Activated T-helper 1 cell treated with anti-CD3 and anti-CD28 coated beads, Interleukin-12 subunit alpha, Interleukin-12 subunit beta, Interleukin-2, Interleukin-4 antibody, amounts not matched to agents 30 ng/mL and 10 ng/mL and 1 ng/mL, durations not matched to agents 14 hours and 24 hours and 36 hours (primary cell): ENCODE measurements at regions of chr1 and their contacts with region 1.

Region 1: DNA sequence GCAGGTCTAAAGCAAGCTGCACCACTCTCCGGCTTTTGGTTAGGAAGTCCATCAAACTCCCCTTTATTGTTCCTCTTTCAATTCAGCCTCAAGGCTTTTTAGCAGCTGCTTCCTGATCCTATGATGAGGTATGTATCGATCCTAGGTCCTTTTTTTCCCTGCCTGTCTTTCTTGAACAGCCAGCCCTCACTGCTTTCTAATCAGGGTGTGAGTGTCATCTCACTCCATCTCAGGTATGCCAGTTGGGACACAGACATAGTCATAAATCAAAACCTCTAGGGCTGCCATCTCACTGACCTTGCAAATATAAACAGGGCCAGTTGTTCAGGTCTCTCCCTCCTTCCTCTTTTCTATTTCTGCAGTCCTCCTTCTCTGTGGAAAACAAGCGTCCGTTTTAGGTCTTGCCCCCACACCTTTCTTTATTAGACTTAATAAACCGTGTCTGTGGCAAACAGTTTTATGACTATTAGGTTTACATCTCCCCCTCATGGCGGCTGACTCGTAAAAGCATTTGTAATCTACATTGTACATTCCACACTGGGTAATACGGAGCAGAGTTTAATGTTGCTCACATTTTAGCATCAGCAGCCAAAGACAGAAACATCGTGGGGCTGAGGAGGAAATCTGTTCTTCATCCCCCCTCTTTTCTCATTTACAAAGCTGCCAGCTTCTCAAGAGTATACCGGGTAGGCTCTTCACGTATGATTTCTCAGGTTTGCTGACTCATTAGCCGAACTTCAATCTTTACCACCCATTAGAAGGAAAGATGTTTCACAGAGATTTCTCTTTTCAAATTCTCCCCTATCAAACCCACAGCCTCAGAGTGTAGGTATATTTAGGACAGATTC is 11.6 kb downstream of the STYXL2 start:
- DNase-seq: no peak
- H3K4me3 Mint-ChIP-seq: peak overlapping the region; percentile 4
- H3K27ac Mint-ChIP-seq: no peak overlapping the region
- H3K4me1 Mint-ChIP-seq: peaks cover 66% of the 10 kb centered on the region
- H3K27me3 Mint-ChIP-seq: no peaks in the 10 kb centered on the region

Region 2: GRCh38 chr1:166952002-166952746 is 153.3 kb before region 1 on chr1:
- intact Hi-C with region 1: no loop called
- DNase-seq: no peak
- H3K4me3 Mint-ChIP-seq: no peak overlapping the region
- H3K27ac Mint-ChIP-seq: peak overlapping the region; percentile 13
- H3K4me1 Mint-ChIP-seq: peaks cover 19% of the 10 kb centered on the region
- H3K27me3 Mint-ChIP-seq: peaks cover 21% of the 10 kb centered on the region

Region 3: GRCh38 chr1:167084757-167085156 is 20.7 kb before region 1 on chr1:
- intact Hi-C with region 1: loop called (anchors 2 kb)
- DNase-seq: no peak
- H3K4me3 Mint-ChIP-seq: no peak overlapping the region
- H3K27ac Mint-ChIP-seq: no peak overlapping the region
- H3K4me1 Mint-ChIP-seq: no peaks in the 10 kb centered on the region
- H3K27me3 Mint-ChIP-seq: peaks cover 7% of the 10 kb centered on the region

Region 4: GRCh38 chr1:167095368-167095767 is 10.1 kb before region 1 on chr1:
- intact Hi-C with region 1: no loop called
- DNase-seq: no peak
- H3K4me3 Mint-ChIP-seq: no peak overlapping the region
- H3K27ac Mint-ChIP-seq: no peak overlapping the region
- H3K4me1 Mint-ChIP-seq: peaks cover 6% of the 10 kb centered on the region
- H3K27me3 Mint-ChIP-seq: no peaks in the 10 kb centered on the region

Region 5: DNA sequence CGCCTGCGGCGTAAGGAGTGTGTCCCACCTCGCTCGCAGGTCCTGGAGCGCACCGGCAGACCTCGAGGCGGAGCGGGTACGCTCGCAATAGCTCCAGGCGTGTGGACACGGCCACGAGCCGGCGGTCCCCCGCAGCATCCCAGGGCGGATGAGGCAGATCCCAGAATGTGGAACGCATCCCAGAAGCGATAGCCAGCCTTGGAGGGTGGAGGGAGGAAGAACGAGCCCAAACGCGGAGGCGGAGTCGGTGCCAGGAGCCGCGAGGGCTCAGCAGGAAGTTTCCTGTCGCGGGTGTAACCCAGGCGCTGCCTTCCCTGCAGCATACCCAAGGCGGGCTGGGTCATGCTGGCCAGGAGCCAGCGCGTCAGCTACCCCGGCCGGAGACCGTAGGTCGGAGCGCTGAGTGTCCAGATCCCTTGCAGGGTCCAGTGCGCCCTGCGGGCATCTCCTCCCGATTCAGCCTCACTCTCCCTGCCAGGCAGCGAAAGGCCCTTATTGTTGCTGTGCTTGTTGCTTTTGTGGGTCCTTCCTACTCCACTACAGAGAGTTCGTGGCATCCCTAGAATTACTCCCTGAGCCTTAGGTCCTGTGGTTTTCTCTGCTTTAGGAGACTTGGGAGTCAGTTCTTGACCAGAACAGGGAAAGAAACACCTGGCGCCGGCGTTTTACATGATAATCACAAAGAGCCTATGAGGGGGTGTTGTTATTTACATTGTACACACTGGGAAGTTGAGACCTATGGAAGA is 16.1 kb after region 1 on chr1:
- intact Hi-C with region 1: loop called (anchors 2 kb)
- DNase-seq: peak; percentile 13
- H3K4me3 Mint-ChIP-seq: peak overlapping the region; percentile 80
- H3K27ac Mint-ChIP-seq: no peak overlapping the region
- H3K4me1 Mint-ChIP-seq: peaks cover 6% of the 10 kb centered on the region
- H3K27me3 Mint-ChIP-seq: peaks cover 8% of the 10 kb centered on the region

Region 6: GRCh38 chr1:167763525-167764220 is 658.2 kb after region 1 on chr1:
- intact Hi-C with region 1: no loop called
- DNase-seq: no peak
- H3K4me3 Mint-ChIP-seq: no peak overlapping the region
- H3K27ac Mint-ChIP-seq: no peak overlapping the region
- H3K4me1 Mint-ChIP-seq: peaks cover 45% of the 10 kb centered on the region
- H3K27me3 Mint-ChIP-seq: no peaks in the 10 kb centered on the region